Endothelial cell of umbilical vein (primary cell): ENCODE measurements at regions of chr19 and their contacts with region 1.

Region 1: DNA sequence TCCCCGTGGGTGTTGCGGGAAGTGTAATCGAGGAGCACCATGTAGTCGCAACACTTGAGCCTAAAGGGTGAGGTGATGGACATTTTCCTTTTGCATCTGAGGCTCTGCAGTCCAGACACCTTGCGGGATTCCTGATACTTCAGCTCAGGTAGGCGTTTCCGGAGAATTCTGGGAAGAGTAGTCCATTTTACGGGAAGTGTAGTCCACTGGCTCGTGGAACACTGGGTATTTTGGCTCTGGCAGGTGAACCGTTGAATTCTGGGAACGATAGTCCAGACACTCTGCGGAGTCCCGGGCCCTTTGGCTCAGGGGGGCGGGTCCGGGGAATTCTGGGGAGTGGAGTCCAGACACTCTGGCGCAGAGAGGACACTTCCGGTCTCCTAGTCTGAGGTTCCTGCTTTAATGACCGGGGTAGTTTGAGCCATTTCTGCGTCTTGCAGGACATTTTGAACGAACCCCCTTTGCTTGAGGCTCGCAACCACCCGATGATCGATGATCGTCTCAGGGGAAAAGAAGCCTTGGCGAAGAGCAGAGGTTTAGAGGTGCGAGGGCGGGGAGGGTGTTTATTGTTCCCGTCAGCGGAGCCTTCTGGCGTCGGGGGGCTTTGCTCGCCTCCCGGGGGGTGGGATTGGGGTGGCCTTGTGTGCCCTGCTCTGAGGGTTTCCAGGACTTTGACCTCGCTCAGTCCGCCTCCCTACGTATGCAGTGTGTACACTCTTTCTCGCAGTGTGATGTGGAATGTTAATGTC is at the start of gene ZNF223:
- DNase-seq: peak; percentile 91
- H3K4me3 ChIP-seq: peak within 1 kb of the TSS; percentile 48 to 64 (median 61)
- H3K27ac ChIP-seq: no peak within 1 kb of the TSS
- H3K4me1 ChIP-seq: peaks cover 11% of the 10 kb centered on the region
- H3K27me3 ChIP-seq: peaks cover 4 to 9% of the 10 kb centered on the region in 2 experiments
- CTCF ChIP-seq: no peak
- POLR2A ChIP-seq: peak; percentile 53
- total RNA-seq, gene ZNF223: 3.4 and 3.7 TPM in 2 replicates

Region 2: DNA sequence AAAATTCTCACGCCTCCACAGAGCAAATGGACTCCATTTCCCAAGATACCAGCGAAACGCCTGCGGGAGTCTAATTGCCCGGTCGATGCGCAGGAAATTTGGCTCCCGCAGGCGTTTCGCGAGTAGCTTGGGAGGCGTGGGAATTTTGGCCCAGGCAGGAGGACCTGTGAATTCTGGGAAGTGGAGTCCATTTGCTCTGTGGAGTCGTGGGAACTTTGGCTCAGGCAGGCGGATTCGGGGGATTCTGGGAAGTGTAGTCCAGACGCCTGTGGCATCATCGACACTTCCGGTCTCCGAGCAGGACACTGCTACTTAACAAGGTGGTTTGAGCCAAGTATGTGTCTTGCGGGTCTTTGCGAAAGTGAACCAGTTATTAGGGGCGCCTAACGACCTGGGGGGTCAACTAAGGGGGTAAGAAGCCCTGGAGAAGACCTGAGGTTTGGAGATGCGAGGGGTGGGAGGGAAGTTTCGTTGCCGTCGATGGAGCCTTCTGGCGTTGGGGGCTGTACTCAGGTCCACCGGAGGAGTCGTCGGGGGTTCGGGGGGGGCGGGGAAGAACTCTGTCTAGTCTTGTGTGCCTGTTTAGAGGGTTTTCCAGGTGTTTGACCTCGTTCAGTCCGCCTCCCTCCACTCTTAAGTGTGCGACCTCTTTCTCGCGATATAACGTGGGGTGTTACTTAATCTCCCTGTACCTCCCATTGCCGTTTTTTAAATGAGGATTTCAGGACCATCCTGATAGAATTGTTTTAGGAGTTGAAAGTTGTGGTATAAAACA is 67.7 kb before region 1 on chr19 and contains the start of gene ZNF155:
- CTCF ChIA-PET with region 1: no interaction called
- POLR2A ChIA-PET with region 1: no interaction called
- dilution Hi-C with region 1: no loop called
- intact Hi-C with region 1: loop called (anchors 5 kb)
- DNase-seq: peak; percentile 95
- H3K4me3 ChIP-seq: peak within 1 kb of the TSS; percentile 32 to 75 (median 68)
- H3K27ac ChIP-seq: peak within 1 kb of the TSS; percentile 23
- H3K4me1 ChIP-seq: peaks cover 6% of the 10 kb centered on the region
- H3K27me3 ChIP-seq: no peaks in the 10 kb centered on the region
- CTCF ChIP-seq: no peak
- POLR2A ChIP-seq: peak; percentile 39
- total RNA-seq, gene ZNF155: 5.9 and 7.6 TPM in 2 replicates

Region 3: GRCh38 chr19:44025217-44025936 is 26.5 kb before region 1 on chr19 and contains the start of gene ZNF222:
- CTCF ChIA-PET with region 1: no interaction called
- POLR2A ChIA-PET with region 1: no interaction called
- dilution Hi-C with region 1: no loop called
- intact Hi-C with region 1: loop called (anchors 1 kb)
- DNase-seq: peak; percentile 88
- H3K4me3 ChIP-seq: peak within 1 kb of the TSS; percentile 76 to 91 (median 88)
- H3K27ac ChIP-seq: peak within 1 kb of the TSS; percentile 70
- H3K4me1 ChIP-seq: no peaks in the 10 kb centered on the region
- H3K27me3 ChIP-seq: peaks cover 2 to 3% of the 10 kb centered on the region in 2 experiments
- CTCF ChIP-seq: no peak
- POLR2A ChIP-seq: peak; percentile 61
- total RNA-seq, gene ZNF222: 4.7 and 5.2 TPM in 2 replicates

Region 4: GRCh38 chr19:44071824-44072542 is 20.2 kb after region 1 on chr19 and contains the start of gene ZNF284:
- CTCF ChIA-PET with region 1: no interaction called
- POLR2A ChIA-PET with region 1: no interaction called
- dilution Hi-C with region 1: no loop called
- intact Hi-C with region 1: loop called (anchors 1 kb)
- DNase-seq: peak; percentile 91
- H3K4me3 ChIP-seq: peak within 1 kb of the TSS; percentile 10 to 67 (median 55)
- H3K27ac ChIP-seq: peak within 1 kb of the TSS; percentile 14
- H3K4me1 ChIP-seq: peaks cover 10% of the 10 kb centered on the region
- H3K27me3 ChIP-seq: no peaks in the 10 kb centered on the region
- CTCF ChIP-seq: no peak
- POLR2A ChIP-seq: peak; percentile 64
- total RNA-seq, gene ZNF284: 2.4 and 2.7 TPM in 2 replicates